CD4-positive, alpha-beta T cell (primary cell): ENCODE measurements at regions of chr4 and their contacts with region 1.

Region 1: DNA sequence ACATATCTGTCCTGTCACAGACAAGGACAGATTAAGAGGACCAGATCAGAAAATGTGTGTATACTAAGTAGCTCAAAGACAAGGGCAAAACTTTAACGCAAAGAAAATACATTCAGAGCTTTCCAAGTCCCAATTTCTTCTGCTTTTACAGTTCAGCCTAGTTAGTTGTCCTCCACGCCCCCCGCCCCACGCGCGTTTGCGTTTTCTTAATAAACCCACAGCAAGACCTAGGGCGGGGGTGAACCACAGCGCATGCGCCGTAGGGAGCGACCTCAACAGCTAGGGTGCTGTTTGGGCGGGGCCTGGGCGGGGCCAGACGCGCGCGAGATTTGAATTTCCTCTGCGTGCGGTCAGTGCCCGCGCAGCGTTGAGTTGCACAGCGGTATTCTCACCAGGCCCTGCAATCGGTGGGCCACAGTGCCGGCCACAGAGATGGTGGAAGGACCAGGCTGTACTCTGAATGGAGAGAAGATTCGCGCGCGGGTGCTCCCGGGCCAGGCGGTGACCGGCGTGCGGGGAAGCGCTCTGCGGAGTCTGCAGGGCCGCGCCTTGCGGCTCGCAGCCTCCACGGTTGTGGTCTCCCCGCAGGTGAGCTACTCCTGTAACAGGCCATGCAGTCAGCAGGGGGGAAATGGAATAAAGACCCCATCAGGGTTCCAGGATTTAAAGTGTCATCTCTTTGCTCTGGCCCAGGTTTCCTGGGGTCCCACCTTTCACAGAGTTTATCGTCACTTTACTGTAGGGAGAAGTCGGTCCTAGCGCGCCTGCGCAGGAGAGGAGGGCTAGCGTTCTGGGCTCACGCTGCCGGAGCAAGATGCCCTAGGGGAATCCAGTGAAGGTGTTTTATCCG is at the start of gene NEIL3:
- DNase-seq: peak; percentile 91 to 98 (median 95)
- ATAC-seq: peak; percentile 81
- H3K4me3 ChIP-seq: peak within 1 kb of the TSS; percentile 72
- H3K4me3 Mint-ChIP-seq: peak within 1 kb of the TSS; percentile 88
- H3K27ac ChIP-seq: no peak within 1 kb of the TSS
- H3K27ac Mint-ChIP-seq: peak within 1 kb of the TSS; percentile 78
- H3K4me1 ChIP-seq: peaks cover 5% of the 10 kb centered on the region
- H3K4me1 Mint-ChIP-seq: peaks cover 37% of the 10 kb centered on the region
- H3K27me3 ChIP-seq: no peaks in the 10 kb centered on the region
- H3K27me3 Mint-ChIP-seq: no peaks in the 10 kb centered on the region
- CTCF ChIP-seq: no peak
- total RNA-seq, gene NEIL3: 0.22 to 0.25 TPM

Region 2: GRCh38 chr4:176319704-176320339 is 989.9 kb before region 1 on chr4 and contains the start of gene SPCS3:
- CTCF ChIA-PET with region 1: no interaction called
- POLR2A ChIA-PET with region 1: no interaction called
- intact Hi-C with region 1: loop called in 1 of 2 experiments (anchors 10 kb)
- DNase-seq: peak; percentile 89 to 99 (median 94)
- ATAC-seq: peak; percentile 89
- H3K4me3 ChIP-seq: peak within 1 kb of the TSS; percentile 72
- H3K4me3 Mint-ChIP-seq: peak within 1 kb of the TSS; percentile 96
- H3K27ac ChIP-seq: peak within 1 kb of the TSS; percentile 86 to 88
- H3K27ac Mint-ChIP-seq: peak within 1 kb of the TSS; percentile 90
- H3K4me1 ChIP-seq: peaks cover under 1% of the 10 kb centered on the region
- H3K4me1 Mint-ChIP-seq: peaks cover 60% of the 10 kb centered on the region
- H3K27me3 ChIP-seq: no peaks in the 10 kb centered on the region
- H3K27me3 Mint-ChIP-seq: no peaks in the 10 kb centered on the region
- CTCF ChIP-seq: no peak
- total RNA-seq, gene SPCS3: 149 TPM

Region 3: GRCh38 chr4:177118596-177118995 is 191.2 kb before region 1 on chr4:
- CTCF ChIA-PET with region 1: no interaction called
- POLR2A ChIA-PET with region 1: no interaction called
- intact Hi-C with region 1: no loop called
- DNase-seq: no peak
- ATAC-seq: no peak
- H3K4me3 ChIP-seq: no peak overlapping the region
- H3K4me3 Mint-ChIP-seq: no peak overlapping the region
- H3K27ac ChIP-seq: no peak overlapping the region
- H3K27ac Mint-ChIP-seq: no peak overlapping the region
- H3K4me1 ChIP-seq: no peaks in the 10 kb centered on the region
- H3K4me1 Mint-ChIP-seq: no peaks in the 10 kb centered on the region
- H3K27me3 ChIP-seq: no peaks in the 10 kb centered on the region
- H3K27me3 Mint-ChIP-seq: no peaks in the 10 kb centered on the region
- CTCF ChIP-seq: no peak

Region 4: DNA sequence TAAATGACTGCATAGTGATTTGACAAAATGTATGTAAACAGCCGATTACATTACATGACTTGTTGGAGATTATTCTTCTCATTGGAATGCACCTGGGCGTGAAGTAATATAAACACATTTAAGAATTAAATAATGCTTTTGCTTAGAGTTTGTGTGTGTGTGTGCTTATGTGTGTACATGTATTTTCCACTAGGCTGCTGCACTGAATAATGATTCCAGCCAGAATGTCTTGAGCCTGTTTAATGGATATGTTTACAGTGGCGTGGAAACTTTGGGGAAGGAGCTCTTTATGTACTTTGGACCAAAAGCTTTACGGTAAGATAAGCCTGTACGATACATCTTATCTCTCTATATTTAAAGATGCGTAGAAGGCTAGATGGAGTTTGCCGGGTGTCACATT is 12.5 kb after region 1 on chr4:
- CTCF ChIA-PET with region 1: no interaction called
- POLR2A ChIA-PET with region 1: interaction called, 14 read pairs
- intact Hi-C with region 1: loop called in 1 of 2 experiments (anchors 2 kb)
- DNase-seq: no peak
- ATAC-seq: no peak
- H3K4me3 ChIP-seq: no peak overlapping the region
- H3K4me3 Mint-ChIP-seq: peak overlapping the region; percentile 13
- H3K27ac ChIP-seq: no peak overlapping the region
- H3K27ac Mint-ChIP-seq: no peak overlapping the region
- H3K4me1 ChIP-seq: peaks cover 11% of the 10 kb centered on the region
- H3K4me1 Mint-ChIP-seq: peaks cover 59% of the 10 kb centered on the region
- H3K27me3 ChIP-seq: no peaks in the 10 kb centered on the region
- H3K27me3 Mint-ChIP-seq: no peaks in the 10 kb centered on the region
- CTCF ChIP-seq: no peak